PC-9 (cell line): ENCODE measurements at regions of chr9 and their contacts with region 1.

Region 1: DNA sequence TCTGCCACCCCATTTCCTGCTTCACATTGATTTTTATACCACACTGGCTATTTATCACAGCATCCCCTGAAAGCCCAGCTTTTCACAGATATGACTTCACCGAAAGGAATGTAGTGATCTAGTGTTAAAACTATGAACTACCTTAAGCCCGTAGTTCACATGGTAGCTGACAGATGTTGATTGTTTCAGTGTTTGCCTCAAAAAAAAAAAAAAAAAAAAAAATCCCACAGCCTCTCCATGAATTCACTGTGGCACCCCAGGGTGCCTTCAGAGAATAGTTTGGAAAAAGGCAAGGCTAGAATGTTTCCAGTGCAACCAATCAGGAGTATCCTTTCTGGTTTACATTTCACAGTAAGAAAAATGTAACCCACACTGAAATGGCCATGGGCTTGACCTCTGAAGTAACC is 37.1 kb downstream of the GLIS3 start:
- DNase-seq: peak; percentile 29 to 90
- H3K4me3 ChIP-seq: no peak overlapping the region
- H3K27ac ChIP-seq: peak overlapping the region; percentile 63
- H3K4me1 ChIP-seq: peaks cover 32% of the 10 kb centered on the region
- H3K27me3 ChIP-seq: no peaks in the 10 kb centered on the region
- CTCF ChIP-seq: no peak

Region 2: GRCh38 chr9:3585606-3586005 is 677.1 kb before region 1 on chr9:
- CTCF ChIA-PET with region 1: no interaction called
- POLR2A ChIA-PET with region 1: no interaction called
- intact Hi-C with region 1: no loop called
- DNase-seq: no peak
- H3K4me3 ChIP-seq: no peak overlapping the region
- H3K27ac ChIP-seq: no peak overlapping the region
- H3K4me1 ChIP-seq: no peaks in the 10 kb centered on the region
- H3K27me3 ChIP-seq: no peaks in the 10 kb centered on the region
- CTCF ChIP-seq: no peak

Region 3: GRCh38 chr9:3746296-3747275 is 516.2 kb before region 1 on chr9:
- CTCF ChIA-PET with region 1: no interaction called
- POLR2A ChIA-PET with region 1: no interaction called
- intact Hi-C with region 1: loop called (anchors 1 kb)
- DNase-seq: peak in 1 of 2 experiments; percentile 88
- H3K4me3 ChIP-seq: no peak overlapping the region
- H3K27ac ChIP-seq: peak overlapping the region; percentile 81
- H3K4me1 ChIP-seq: peaks cover 36% of the 10 kb centered on the region
- H3K27me3 ChIP-seq: no peaks in the 10 kb centered on the region
- CTCF ChIP-seq: no peak

Region 4: GRCh38 chr9:4106081-4106759 is 156.5 kb before region 1 on chr9:
- CTCF ChIA-PET with region 1: no interaction called
- POLR2A ChIA-PET with region 1: interaction called, 20 read pairs
- intact Hi-C with region 1: no loop called
- DNase-seq: peak in 1 of 2 experiments; percentile 30
- H3K4me3 ChIP-seq: no peak overlapping the region
- H3K27ac ChIP-seq: no peak overlapping the region
- H3K4me1 ChIP-seq: no peaks in the 10 kb centered on the region
- H3K27me3 ChIP-seq: no peaks in the 10 kb centered on the region
- CTCF ChIP-seq: no peak

Region 5: GRCh38 chr9:4280605-4281004 is 17.9 kb after region 1 on chr9:
- CTCF ChIA-PET with region 1: no interaction called
- POLR2A ChIA-PET with region 1: interaction called, 32 read pairs
- intact Hi-C with region 1: no loop called
- DNase-seq: no peak
- H3K4me3 ChIP-seq: no peak overlapping the region
- H3K27ac ChIP-seq: no peak overlapping the region
- H3K4me1 ChIP-seq: no peaks in the 10 kb centered on the region
- H3K27me3 ChIP-seq: no peaks in the 10 kb centered on the region
- CTCF ChIP-seq: no peak

Region 6: DNA sequence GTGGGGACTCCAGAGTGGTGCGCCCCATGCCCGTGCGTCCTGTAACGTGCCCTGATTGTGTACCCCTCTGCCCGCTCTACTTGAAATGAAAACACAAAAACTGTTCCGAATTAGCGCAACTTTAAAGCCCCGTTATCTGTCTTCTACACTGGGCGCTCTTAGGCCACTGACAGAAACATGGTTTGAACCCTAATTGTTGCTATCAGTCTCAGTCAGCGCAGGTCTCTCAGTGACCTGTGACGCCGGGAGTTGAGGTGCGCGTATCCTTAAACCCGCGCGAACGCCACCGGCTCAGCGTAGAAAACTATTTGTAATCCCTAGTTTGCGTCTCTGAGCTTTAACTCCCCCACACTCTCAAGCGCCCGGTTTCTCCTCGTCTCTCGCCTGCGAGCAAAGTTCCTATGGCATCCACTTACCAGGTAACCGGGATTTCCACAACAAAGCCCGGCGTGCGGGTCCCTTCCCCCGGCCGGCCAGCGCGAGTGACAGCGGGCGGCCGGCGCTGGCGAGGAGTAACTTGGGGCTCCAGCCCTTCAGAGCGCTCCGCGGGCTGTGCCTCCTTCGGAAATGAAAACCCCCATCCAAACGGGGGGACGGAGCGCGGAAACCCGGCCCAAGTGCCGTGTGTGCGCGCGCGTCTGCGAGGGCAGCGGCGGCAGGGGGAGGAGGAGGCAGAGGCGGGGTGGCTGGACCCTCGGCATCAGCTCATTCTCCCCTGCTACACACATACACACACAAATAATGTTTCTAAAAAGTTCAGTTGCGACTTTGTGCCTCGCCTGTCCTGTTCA is 36.5 kb after region 1 on chr9:
- CTCF ChIA-PET with region 1: no interaction called
- POLR2A ChIA-PET with region 1: no interaction called
- intact Hi-C with region 1: no loop called
- DNase-seq: peak; percentile 18 to 34
- H3K4me3 ChIP-seq: peak overlapping the region; percentile 90
- H3K27ac ChIP-seq: no peak overlapping the region; the same call in 1 of the 2 replicates
- H3K4me1 ChIP-seq: peaks cover 40% of the 10 kb centered on the region
- H3K27me3 ChIP-seq: no peaks in the 10 kb centered on the region
- CTCF ChIP-seq: no peak

Region 7: GRCh38 chr9:4666042-4666699 is 403.4 kb after region 1 on chr9 and contains the start of gene SPATA6L:
- CTCF ChIA-PET with region 1: no interaction called
- POLR2A ChIA-PET with region 1: no interaction called
- intact Hi-C with region 1: no loop called
- DNase-seq: peak in 1 of 2 experiments; percentile 38
- H3K4me3 ChIP-seq: peak within 1 kb of the TSS; percentile 55
- H3K27ac ChIP-seq: no peak within 1 kb of the TSS
- H3K4me1 ChIP-seq: peaks cover 41% of the 10 kb centered on the region
- H3K27me3 ChIP-seq: no peaks in the 10 kb centered on the region
- CTCF ChIP-seq: no peak
- total RNA-seq, gene SPATA6L: 5.9 and 7.1 TPM in 2 replicates

Region 8: GRCh38 chr9:4700091-4700490 is 437.4 kb after region 1 on chr9:
- CTCF ChIA-PET with region 1: no interaction called
- POLR2A ChIA-PET with region 1: no interaction called
- intact Hi-C with region 1: no loop called
- DNase-seq: no peak
- H3K4me3 ChIP-seq: no peak overlapping the region
- H3K27ac ChIP-seq: no peak overlapping the region
- H3K4me1 ChIP-seq: no peaks in the 10 kb centered on the region
- H3K27me3 ChIP-seq: no peaks in the 10 kb centered on the region
- CTCF ChIP-seq: no peak